ENCODE measurements at regions of chr1 and their contacts with region 1.

Region 1: DNA sequence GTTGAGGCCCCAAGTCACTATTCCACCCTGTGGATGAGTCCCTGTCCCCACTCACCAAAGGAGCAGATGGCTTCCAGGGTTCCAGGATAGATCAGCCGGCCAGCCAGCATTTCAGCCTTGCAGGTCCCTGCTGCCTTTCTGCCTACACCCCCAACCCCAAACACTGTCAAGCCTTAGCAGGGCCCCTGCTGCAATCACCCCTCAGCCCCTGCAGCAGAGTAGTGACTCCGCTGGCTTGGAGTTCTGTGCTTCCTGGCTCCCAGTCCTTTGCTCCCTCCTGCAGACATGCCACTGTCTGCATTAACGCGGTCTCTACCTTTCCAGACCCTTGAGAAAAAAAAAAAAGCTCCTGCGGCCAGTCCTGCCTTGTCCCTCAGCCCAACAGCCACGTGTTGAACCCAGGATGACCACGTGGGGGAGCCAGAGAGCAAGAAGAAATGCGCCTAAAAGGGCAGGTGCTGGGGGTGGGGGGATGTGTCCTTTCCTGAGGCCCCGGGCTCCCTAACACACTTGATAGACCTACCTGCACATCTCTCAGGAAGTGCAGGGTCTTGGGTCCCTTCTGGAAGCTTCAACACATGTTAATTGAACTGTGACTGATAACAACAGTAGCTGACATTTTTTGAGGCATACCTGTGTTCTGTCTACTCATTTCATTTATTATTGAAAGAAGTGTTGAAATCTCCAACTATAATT is 37.4 kb downstream of the RASSF5 start:
- DNase-seq: peak; percentile 85
- CTCF ChIP-seq: peak; percentile 93

Region 2: DNA sequence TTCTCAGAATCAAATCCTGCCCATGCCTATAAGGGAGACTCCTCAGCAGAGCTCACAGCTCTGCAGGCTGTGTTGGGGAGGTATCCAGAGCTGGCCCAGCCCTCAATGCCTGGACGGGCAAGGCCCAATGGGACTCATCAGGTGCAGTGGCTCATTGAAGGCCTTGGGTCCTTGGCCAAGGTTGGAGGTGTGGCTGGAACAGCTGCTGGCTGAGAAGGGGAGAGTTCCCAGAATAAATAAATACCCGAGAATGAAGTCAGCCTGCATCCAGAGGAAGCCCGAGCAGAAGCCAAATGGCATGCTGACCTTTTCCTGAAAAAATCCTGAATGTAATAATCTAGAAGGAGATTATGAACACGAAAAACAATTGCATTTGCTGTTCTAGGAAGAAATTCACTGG is 99.6 kb before region 1 on chr1:
- CTCF ChIA-PET with region 1: no interaction called
- POLR2A ChIA-PET with region 1: no interaction called
- DNase-seq: no peak
- CTCF ChIP-seq: no peak

Region 3: DNA sequence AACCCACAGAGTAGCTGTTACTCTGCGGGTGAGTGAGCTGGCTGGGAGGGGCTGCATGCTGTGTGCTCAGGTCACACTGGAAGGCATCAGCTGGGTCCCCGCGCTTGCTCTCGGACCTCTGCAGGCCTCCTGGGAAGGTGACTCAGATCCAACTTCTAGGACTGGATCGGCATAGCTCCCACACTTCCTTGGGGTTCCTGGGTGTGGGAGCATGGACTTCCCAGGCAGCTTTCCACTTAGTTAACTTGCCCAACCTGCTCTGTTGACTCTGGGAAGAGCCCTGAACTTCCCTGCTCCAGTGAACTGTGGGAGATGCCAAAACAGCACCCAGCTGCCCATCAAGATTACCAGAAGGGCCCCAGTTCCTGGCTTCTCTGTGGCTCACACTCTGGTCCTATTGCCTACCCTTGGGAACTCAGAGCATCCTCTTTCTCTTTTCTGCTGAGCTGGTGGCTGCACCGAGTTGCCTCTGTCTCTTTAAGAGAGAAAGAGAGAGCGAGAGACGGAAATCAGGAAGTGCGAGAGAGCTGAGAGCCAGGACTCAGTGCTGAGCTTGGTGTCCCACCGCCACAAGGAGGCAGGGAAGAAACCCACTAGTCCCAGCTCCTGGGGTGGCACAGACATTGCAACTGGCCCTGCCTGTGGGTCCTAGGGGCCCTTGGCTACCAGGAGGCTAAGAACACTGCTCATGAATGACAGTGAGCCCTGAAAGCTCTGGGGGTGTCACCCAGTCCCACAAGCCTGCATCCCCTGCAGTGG is 74.6 kb before region 1 on chr1 and contains the start of gene IKBKE:
- CTCF ChIA-PET with region 1: interaction called, 17 read pairs
- POLR2A ChIA-PET with region 1: no interaction called
- DNase-seq: peak; percentile 80
- CTCF ChIP-seq: no peak

Region 4: GRCh38 chr1:206496131-206496793 is 48.4 kb before region 1 on chr1:
- CTCF ChIA-PET with region 1: interaction called, 25 read pairs
- POLR2A ChIA-PET with region 1: no interaction called
- DNase-seq: peak; percentile 75
- CTCF ChIP-seq: no peak

Region 5: GRCh38 chr1:206524739-206525369 is 19.9 kb before region 1 on chr1:
- CTCF ChIA-PET with region 1: interaction called, 32 read pairs
- POLR2A ChIA-PET with region 1: no interaction called
- DNase-seq: no peak
- CTCF ChIP-seq: no peak

Region 6: DNA sequence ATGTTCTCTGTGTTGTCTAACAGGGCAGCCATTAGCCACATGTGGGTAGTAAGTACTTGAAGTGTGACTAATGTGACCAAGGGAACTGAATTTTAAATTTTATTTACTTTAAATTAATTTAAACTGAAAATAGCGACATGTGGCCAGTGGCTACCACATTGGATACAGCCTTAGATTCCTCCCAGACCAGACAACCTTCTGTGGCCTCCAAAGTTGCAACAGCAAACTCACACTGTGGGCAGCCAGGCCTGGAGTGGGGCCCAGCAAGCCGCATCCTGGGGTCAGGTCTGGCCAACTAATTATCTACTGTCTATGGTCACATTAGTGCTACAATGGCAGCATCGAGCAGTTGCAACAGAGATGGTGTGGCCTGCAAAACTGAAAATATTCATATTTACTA is 55.8 kb after region 1 on chr1:
- CTCF ChIA-PET with region 1: interaction called, 10 read pairs
- POLR2A ChIA-PET with region 1: no interaction called
- DNase-seq: no peak
- CTCF ChIP-seq: no peak